ENCODE measurements at regions of chr20 and their contacts with region 1.

Region 1: GRCh38 chr20:330233-331149 is 5.1 kb downstream of the SOX12 start:
- DNase-seq: peak; percentile 72
- H3K4me3 Mint-ChIP-seq: no peak overlapping the region
- H3K27ac Mint-ChIP-seq: no peak overlapping the region
- H3K4me1 Mint-ChIP-seq: peaks cover 13% of the 10 kb centered on the region
- H3K27me3 Mint-ChIP-seq: no peaks in the 10 kb centered on the region

Region 2: DNA sequence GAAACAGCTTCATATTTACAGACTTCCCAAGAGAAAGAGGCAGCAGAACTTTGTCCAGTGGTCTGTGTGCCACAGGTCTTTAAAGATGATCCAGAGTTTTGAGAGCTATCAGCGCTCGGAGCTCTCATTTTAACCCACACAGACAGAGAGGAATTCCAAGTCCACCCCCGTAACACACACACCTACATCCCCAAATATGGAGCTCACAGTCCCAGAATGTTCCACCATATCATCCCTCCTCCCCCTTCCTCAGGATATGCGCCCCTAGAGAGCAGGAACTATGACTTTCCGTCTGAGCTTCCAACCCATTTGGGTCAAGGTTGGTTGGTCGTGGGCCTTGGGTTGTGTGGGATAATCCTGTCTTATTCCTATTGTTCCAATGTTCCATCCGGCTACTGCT is 140.9 kb before region 1 on chr20 and contains the start of gene DEFB128:
- CTCF ChIA-PET with region 1: no interaction called
- intact Hi-C with region 1: no loop called
- DNase-seq: no peak
- H3K4me3 Mint-ChIP-seq: no peak within 1 kb of the TSS
- H3K27ac Mint-ChIP-seq: no peak within 1 kb of the TSS
- H3K4me1 Mint-ChIP-seq: no peaks in the 10 kb centered on the region
- H3K27me3 Mint-ChIP-seq: peaks cover 31% of the 10 kb centered on the region
- total RNA-seq, gene DEFB128: not detected

Region 3: GRCh38 chr20:208942-209566 is 121.4 kb before region 1 on chr20:
- CTCF ChIA-PET with region 1: interaction called, 7 read pairs
- intact Hi-C with region 1: loop called (anchors 1 kb)
- DNase-seq: peak; percentile 41
- H3K4me3 Mint-ChIP-seq: no peak overlapping the region
- H3K27ac Mint-ChIP-seq: no peak overlapping the region
- H3K4me1 Mint-ChIP-seq: no peaks in the 10 kb centered on the region
- H3K27me3 Mint-ChIP-seq: no peaks in the 10 kb centered on the region

Region 4: DNA sequence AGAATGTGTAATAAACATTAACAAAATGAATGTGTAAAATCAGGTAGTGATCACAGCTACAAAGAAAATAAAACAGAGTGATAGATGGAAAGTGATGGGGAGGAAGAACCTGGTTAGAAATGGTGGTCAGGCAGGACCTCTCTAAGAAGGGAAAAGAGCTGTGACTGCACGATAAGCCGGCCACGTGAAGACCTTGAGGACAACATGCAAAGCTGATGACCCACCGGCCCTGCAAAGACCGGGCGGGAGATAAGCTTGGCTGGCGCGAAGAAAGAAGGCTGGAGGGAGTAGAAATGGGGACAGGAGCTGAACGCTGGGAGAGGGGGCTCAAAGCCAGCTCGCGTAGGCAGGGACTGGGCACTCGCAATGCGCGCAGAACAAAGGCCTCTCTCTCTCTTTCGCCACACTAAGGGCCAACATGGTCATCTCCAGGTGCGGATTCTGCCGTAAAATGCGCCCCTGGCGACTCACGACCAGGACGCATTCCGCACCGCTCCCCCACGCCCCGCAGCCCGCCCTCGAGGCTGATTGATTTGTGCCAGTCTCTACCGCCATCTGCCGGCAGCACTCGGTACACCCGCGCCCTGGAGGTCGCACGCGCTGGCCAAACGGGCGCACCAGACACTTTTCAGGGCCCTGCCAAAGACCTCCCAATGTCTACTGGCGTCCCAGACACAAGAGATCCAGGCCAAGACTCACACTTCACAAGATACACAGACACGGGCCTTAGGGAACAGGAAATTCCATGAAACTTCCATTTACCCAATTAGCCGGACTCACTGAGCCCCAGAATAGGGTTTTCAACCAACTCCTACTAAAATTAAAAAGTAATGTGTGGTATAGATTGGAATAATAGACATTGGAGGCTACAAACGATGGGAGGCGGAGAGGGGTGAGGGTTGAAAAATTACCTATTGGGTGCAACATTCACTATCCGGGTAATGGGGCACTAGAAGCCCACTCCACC is 63.6 kb before region 1 on chr20:
- CTCF ChIA-PET with region 1: interaction called, 28 read pairs
- intact Hi-C with region 1: loop called (anchors 1 kb)
- DNase-seq: peak; percentile 93
- H3K4me3 Mint-ChIP-seq: peak overlapping the region; percentile 78
- H3K27ac Mint-ChIP-seq: peak overlapping the region; percentile 38
- H3K4me1 Mint-ChIP-seq: peaks cover 14% of the 10 kb centered on the region
- H3K27me3 Mint-ChIP-seq: peaks cover 3% of the 10 kb centered on the region

Region 5: DNA sequence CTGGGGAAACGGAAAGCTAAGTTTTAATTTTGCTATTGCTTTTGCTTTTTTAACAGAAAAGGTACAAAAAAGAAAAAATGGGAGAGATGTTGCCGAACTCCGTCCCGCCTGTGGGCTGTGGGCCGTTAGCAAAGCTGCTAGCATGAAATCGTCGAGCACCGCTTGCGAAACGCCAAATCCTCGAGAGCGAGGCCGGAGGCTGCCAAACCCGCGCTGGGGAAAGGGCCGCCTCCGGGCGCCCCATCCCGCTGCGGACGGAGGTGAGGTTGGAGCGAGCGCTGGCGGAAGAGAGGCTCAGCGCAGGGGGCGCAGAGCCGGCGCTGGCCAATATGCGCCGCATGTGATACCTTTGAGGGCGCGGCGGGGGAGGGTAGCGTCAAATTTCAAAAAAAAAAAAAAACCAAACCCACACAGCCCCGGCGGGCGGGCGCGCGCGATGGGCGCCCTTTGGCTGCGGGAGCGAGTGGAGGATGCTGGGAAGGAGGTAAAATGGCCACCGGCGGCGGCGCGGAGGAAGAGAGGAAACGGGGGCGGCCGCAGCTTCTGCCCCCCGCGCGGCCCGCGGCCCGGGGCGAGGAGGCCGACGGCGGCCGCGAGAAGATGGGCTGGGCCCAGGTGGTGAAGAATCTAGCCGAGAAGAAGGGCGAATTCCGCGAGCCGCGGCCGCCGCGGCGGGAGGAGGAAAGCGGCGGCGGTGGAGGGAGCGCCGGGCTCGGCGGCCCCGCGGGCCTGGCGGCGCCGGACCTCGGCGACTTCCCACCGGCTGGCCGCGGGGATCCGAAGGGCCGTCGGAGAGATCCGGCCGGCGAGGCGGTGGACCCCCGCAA is 33.2 kb before region 1 on chr20 and contains the start of gene ZCCHC3:
- CTCF ChIA-PET with region 1: interaction called, 23 read pairs
- intact Hi-C with region 1: loop called (anchors 1 kb)
- DNase-seq: peak; percentile 87
- H3K4me3 Mint-ChIP-seq: peak within 1 kb of the TSS; percentile 100
- H3K27ac Mint-ChIP-seq: peak within 1 kb of the TSS; percentile 100
- H3K4me1 Mint-ChIP-seq: peaks cover 30% of the 10 kb centered on the region
- H3K27me3 Mint-ChIP-seq: no peaks in the 10 kb centered on the region
- total RNA-seq, gene ZCCHC3: 13.6 to 15.6 TPM

Region 6: DNA sequence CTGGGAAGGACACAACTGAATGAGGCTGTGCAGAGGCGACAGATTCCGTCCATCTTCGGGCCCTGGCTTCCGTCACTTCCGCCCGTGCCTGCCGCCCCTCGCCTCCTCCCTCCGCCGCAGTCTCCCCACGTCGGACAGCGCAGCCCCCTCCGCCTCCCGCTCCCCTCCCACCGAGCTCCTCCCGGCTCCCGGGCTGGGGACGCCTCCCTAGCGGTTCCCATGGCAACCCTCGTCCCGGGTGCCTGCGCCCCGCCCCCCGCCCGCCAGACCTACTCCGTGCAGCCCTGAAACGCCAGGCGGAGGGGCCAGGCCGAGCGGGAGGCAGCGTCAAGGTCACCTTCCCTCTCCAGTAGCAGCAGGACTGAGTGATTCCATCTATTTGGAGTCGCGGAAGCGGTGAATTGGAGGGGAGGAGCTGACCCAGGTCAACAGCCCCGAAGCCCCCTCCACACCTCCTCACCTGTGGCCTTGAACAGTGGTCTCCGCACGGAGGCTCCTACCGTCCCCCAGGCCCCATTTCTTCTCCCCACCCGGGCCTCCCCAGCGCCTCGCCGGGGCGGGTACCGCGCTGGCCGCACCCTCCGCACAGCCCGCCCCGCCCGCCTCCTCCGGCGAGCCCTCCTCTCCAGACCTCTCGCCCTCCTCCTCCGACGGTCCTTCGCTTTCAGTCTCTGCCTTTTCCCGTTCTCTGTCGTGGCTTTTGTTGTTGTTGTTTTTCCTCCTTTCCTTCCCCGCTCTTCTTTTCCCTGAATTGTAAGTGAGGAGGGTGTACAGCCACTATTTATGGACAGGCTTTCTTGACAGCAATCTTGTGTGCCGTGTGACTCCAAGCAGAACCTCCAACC is 17.4 kb after region 1 on chr20:
- CTCF ChIA-PET with region 1: interaction called, 10 read pairs
- intact Hi-C with region 1: no loop called
- DNase-seq: peak; percentile 57
- H3K4me3 Mint-ChIP-seq: peak overlapping the region; percentile 79
- H3K27ac Mint-ChIP-seq: no peak overlapping the region
- H3K4me1 Mint-ChIP-seq: peaks cover 9% of the 10 kb centered on the region
- H3K27me3 Mint-ChIP-seq: peaks cover 5% of the 10 kb centered on the region

Region 7: GRCh38 chr20:610130-611046 is 279.9 kb after region 1 on chr20 and contains the start of gene TCF15:
- CTCF ChIA-PET with region 1: no interaction called
- intact Hi-C with region 1: no loop called
- DNase-seq: no peak
- H3K4me3 Mint-ChIP-seq: peak within 1 kb of the TSS; percentile 21
- H3K27ac Mint-ChIP-seq: no peak within 1 kb of the TSS
- H3K4me1 Mint-ChIP-seq: peaks cover 11% of the 10 kb centered on the region
- H3K27me3 Mint-ChIP-seq: peaks cover 51% of the 10 kb centered on the region
- total RNA-seq, gene TCF15: not detected

Measured in activated naive CD4-positive, alpha-beta T cell treated with anti-CD3 and anti-CD28 coated beads for 36 hours (primary cell).